ENCODE measurements at regions of chr21 and their contacts with region 1.

Region 1: DNA sequence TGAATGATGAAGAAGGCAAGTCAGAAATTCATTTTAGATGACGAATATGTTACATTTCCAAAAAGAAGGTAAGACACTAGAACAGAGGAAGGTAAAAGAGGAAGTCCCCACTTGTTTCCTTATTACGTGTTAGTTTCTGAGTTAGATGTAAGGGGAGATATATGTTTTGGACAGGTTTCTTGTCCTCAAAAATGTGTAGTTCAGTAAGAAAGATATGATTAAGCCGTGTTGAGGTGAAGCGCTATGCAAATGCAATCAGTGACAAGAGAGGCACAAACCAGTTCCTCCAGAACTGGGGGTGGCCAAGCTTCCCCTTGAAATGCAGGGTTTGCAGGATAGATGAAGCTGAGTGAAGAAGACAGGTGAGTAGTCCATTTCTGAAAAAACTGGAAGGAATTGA is 293.3 kb upstream of the RUNX1 start:
- DNase-seq: no peak
- H3K4me3 Mint-ChIP-seq: peak overlapping the region; percentile 75
- H3K27ac Mint-ChIP-seq: peak overlapping the region; percentile 99
- H3K4me1 Mint-ChIP-seq: peaks cover 51% of the 10 kb centered on the region
- H3K27me3 Mint-ChIP-seq: no peaks in the 10 kb centered on the region

Region 2: DNA sequence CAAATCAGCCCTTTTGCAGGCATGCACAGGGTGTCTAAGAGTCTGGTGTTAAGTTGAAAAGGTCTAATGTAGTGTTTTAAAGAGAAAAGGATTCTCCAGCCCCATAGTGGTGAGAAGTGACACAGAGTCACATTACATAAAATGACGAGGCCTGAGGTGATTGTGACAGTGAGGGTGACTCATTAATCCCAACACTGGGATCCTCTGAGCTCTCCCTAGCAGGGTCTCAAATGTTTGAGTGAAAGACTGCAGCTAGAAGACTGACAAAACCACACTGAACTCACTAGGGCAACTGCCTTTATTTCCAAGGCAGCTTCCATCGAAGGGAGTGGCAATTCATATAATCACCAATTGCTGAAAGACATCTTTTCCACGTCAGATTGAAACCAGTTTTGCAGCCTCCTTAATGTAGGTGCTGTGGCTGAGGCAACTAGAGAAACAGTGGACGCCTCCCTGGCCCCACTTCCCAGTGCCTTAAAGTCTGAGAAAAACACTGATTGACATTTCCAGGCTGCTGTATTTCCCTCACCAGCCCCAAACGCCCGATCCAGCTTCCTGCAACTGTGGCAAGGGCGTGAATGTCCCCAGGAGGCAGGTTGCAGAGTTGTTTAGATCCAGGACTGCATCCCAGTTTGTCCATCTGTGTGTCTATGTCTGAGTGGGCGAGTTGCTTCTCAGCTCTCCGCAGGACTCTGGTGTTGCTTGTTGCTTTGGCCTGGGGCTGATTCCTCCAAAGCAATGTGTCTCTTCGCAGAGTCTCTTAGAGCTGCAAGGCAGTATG is 374.7 kb before region 1 on chr21:
- intact Hi-C with region 1: loop called (anchors 5 kb)
- DNase-seq: no peak
- H3K4me3 Mint-ChIP-seq: peak overlapping the region; percentile 80
- H3K27ac Mint-ChIP-seq: peak overlapping the region; percentile 94
- H3K4me1 Mint-ChIP-seq: peaks cover 91% of the 10 kb centered on the region
- H3K27me3 Mint-ChIP-seq: peaks cover 2% of the 10 kb centered on the region

Region 3: DNA sequence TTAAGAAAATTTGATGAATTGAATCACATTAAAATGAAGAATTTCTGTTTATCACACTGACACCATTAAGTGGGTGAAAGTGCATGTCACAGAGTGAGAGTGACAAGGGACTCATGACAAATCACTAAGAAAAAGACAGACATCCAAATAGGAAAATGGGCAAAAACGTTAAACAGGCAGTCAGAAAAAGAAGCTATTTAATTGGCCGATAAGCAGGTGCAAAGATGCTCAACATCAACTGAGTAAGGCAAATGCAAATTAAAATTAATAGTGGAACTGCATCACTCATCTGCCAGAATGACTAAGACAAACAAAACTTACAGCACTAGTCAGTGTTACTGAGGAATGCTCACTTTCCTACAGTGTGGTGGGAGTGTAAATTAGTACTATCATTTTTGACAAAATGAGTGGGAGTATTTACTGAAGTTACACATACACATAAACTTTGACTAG is 254.1 kb before region 1 on chr21:
- intact Hi-C with region 1: loop called (anchors 1 kb)
- DNase-seq: no peak
- H3K4me3 Mint-ChIP-seq: no peak overlapping the region
- H3K27ac Mint-ChIP-seq: peak overlapping the region; percentile 89
- H3K4me1 Mint-ChIP-seq: peaks cover 36% of the 10 kb centered on the region
- H3K27me3 Mint-ChIP-seq: no peaks in the 10 kb centered on the region

Region 4: DNA sequence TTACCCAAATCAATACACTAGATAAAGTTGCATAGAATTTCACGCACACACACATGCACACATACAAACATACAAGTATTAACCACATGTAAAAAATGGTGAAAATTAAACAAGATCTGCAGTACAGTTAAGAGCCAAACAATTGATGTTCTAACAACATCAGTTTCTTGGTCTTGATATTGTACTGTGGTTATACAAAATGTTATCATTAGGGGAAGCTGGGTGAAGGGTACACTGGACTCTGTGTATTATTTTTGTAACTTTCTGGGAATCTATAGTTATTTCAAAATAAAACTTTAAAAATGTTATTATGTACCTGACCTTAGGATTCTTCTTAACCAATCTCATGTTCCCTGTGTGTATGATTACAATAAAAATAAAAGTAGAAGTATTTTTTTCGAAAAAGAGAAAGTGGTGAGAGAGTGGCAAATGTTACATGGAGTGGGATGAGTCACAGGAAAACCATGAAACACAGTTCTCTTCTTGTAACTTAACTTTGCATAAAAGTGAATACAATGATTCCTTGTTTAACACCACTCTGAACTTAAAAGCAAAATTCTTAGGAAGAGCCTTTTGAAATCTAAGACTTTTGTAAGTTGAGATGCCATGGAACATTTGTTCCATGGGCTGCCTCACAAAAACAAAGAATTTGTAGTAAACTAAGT is 191.7 kb before region 1 on chr21:
- intact Hi-C with region 1: loop called (anchors 2 kb)
- DNase-seq: no peak
- H3K4me3 Mint-ChIP-seq: no peak overlapping the region
- H3K27ac Mint-ChIP-seq: peak overlapping the region; percentile 42
- H3K4me1 Mint-ChIP-seq: peaks cover 36% of the 10 kb centered on the region
- H3K27me3 Mint-ChIP-seq: no peaks in the 10 kb centered on the region

Region 5: DNA sequence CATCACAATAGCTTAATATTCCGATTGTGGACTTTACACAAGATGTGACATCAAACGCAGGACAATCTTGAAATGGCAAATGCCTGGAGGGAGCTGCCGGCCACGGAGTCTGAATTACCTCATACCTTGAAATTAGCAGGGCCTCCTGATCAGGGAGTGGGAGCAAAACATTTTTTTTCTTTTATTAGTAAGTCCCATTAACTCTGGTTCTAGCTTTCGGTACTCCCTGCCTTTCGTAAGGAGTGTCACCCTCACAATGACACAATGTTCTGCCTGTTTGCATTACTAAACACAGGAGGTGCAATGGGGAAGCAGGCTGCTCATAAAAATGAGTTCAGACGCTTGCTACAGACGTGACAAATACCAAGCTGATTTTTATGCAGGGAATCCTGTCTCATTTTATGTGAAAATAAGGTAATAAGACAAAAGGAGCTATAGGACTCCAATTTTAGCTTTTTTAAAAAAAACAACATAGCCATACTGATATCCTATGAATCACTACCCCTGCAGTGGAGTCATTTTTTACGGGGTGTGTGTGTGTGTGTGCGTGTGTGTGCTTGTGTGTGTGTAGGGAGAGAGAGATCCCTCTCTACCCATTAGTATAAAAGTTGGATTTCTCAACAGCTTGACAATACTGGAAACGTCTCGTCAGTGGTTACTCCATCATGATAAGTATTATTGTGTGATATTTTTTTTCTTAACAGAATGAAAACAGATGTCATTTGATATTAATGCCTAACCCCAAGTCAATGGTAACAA is 88.3 kb before region 1 on chr21:
- intact Hi-C with region 1: loop called (anchors 2 kb)
- DNase-seq: no peak
- H3K4me3 Mint-ChIP-seq: no peak overlapping the region
- H3K27ac Mint-ChIP-seq: no peak overlapping the region
- H3K4me1 Mint-ChIP-seq: peaks cover 13% of the 10 kb centered on the region
- H3K27me3 Mint-ChIP-seq: no peaks in the 10 kb centered on the region

Region 6: GRCh38 chr21:35400233-35400957 is 58.0 kb after region 1 on chr21:
- intact Hi-C with region 1: loop called (anchors 1 kb)
- DNase-seq: peak; percentile 9
- H3K4me3 Mint-ChIP-seq: no peak overlapping the region
- H3K27ac Mint-ChIP-seq: no peak overlapping the region
- H3K4me1 Mint-ChIP-seq: peaks cover 23% of the 10 kb centered on the region
- H3K27me3 Mint-ChIP-seq: no peaks in the 10 kb centered on the region

Region 7: DNA sequence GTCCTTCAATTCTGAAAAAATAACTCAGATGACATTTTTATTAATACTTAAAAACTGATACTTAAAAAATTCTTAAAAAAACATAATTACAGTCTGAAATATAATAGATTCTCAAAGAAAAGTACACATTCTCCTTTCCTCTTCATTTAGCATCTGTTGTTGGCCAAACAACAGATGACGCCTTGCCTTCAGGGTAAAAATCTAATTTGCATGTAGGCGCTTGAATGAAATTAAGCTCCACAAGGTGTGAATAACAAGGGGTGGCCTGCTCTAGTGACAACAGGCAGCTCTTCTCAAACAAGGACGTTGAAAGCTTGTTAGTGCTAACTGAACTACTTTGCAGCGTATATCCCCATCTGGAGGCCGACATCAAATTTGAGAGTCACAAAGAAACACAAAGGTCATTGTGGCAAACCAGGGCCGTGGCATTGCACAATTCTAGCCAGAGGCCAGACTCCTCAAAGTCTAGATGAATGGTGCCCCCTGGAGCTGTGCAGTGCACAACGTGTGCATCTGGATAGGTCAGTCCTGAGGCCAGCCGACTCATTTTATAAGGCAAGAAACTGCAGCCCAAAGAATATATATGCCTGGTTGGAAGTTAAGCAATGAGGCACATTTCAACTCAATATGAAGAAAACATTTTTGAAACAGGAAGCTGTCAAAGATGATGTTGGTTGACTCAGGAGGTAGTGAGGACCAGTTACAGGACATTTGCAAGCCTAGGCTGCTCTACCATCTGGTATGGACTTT is 165.9 kb after region 1 on chr21:
- intact Hi-C with region 1: loop called (anchors 5 kb)
- DNase-seq: no peak
- H3K4me3 Mint-ChIP-seq: no peak overlapping the region
- H3K27ac Mint-ChIP-seq: no peak overlapping the region
- H3K4me1 Mint-ChIP-seq: peaks cover 68% of the 10 kb centered on the region
- H3K27me3 Mint-ChIP-seq: no peaks in the 10 kb centered on the region

Region 8: DNA sequence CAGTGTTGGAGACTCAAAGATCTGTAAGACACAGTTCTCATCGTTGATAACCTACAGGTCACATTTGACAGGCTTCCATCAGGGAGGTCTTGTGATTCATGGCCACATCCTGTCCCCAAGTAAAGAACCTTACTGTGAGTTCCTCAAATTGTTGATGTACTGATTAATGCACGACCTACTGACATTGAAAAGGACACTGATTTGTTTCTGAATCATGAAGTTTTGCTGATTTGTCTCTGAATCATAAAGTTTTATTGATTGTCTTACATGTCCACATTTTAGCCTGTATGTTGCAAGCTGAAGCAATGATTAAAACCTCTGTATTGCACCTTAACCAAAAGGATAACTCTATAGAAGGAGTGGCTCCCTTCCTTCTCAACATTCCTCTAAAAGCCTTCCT is 183.0 kb after region 1 on chr21:
- intact Hi-C with region 1: no loop called
- DNase-seq: no peak
- H3K4me3 Mint-ChIP-seq: no peak overlapping the region
- H3K27ac Mint-ChIP-seq: peak overlapping the region; percentile 13
- H3K4me1 Mint-ChIP-seq: peaks cover 58% of the 10 kb centered on the region
- H3K27me3 Mint-ChIP-seq: no peaks in the 10 kb centered on the region

Region 9: DNA sequence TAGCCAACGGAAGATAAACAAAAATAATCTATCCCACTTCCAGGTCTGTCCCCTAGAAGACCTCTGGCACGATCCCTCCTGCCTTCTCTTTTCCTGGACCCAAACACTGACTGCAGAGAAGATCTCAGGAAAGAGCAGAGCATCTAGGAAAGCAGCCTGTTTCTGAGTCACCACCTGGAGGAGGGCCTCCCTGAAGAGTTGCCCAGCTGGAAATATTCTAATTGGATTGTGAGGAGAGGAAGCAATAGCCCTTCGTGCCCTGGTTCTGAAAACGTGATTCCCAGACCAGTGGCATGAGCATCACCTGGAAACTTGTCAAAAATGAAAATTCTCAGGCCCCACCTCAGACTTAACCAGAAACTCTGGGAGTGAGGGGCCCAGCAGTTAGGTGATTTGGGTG is 306.7 kb after region 1 on chr21:
- intact Hi-C with region 1: no loop called
- DNase-seq: no peak
- H3K4me3 Mint-ChIP-seq: no peak overlapping the region
- H3K27ac Mint-ChIP-seq: no peak overlapping the region
- H3K4me1 Mint-ChIP-seq: no peaks in the 10 kb centered on the region
- H3K27me3 Mint-ChIP-seq: peaks cover 20% of the 10 kb centered on the region